Activated CD4-positive, alpha-beta T cell treated with anti-CD3 and anti-CD28 coated beads, Interleukin-2, amount 10 ng/mL, durations not matched to agents 24 days and 14 days (primary cell): ENCODE measurements at regions of chr1 and their contacts with region 1.

Region 1: DNA sequence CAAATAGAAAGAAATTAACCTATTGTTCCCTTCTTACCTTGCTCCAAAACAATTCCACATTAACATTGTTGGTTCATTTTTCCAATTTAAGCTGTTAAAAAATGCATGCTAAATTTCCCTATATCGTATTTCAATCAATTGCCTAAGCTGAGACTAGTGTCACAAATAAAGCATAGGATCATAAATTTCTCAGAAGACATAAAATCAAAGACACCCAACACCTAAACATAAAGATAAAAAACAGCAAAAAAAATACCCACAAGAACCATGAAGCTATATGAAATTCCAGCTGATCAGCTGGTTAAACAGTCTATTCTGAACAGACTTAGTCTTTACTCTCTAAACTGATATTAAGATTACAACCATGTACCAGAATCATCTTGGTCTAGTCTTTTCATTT is 32.3 kb downstream of the ACBD6 start:
- DNase-seq: no peak
- H3K4me3 Mint-ChIP-seq: no peak overlapping the region
- H3K27ac Mint-ChIP-seq: no peak overlapping the region
- H3K4me1 Mint-ChIP-seq: no peaks in the 10 kb centered on the region
- H3K27me3 Mint-ChIP-seq: no peaks in the 10 kb centered on the region

Region 2: DNA sequence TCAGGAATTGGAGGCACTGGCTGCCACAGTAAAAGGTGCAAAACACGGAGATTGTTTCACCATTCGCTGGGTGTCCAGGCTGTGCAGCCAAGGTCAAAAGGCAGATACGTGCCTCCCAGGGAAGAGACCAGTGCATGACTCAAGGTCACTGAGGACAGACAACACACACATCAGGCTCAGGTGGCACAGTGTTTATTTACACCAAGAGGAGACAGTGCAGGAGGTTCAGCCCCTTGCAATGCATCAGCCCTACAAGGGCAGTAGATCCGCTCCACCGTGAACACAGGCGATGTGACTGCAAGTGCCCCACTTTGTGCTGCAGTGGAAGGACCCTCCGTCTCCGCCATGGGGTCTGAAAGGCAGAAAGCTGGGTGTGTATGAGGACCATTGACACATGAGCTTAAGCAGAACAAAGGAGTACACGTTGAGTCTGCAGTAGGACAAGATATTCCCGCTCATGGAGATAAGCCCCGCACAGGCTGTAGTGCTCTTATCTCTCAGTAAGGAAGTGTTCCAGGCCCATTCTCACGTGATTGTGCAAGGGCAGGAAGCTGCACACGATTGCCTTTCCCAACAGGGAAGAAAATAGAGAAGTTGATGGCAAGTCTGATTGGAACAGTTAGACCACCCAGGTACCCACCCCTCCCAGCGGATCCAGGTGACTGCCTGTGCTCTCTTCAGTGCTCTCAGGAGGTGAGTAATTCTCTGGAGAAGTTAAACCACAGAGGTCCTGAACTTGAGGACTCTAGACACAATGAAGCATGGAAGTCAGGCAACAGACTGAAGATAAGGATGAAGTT is 352.9 kb before region 1 on chr1:
- intact Hi-C with region 1: no loop called
- DNase-seq: no peak
- H3K4me3 Mint-ChIP-seq: no peak overlapping the region
- H3K27ac Mint-ChIP-seq: no peak overlapping the region
- H3K4me1 Mint-ChIP-seq: no peaks in the 10 kb centered on the region
- H3K27me3 Mint-ChIP-seq: peaks cover 2% of the 10 kb centered on the region

Region 3: GRCh38 chr1:180262572-180263488 is 207.2 kb before region 1 on chr1:
- intact Hi-C with region 1: loop called (anchors 5 kb)
- DNase-seq: no peak
- H3K4me3 Mint-ChIP-seq: no peak overlapping the region
- H3K27ac Mint-ChIP-seq: no peak overlapping the region
- H3K4me1 Mint-ChIP-seq: no peaks in the 10 kb centered on the region
- H3K27me3 Mint-ChIP-seq: peaks cover 2% of the 10 kb centered on the region

Region 4: DNA sequence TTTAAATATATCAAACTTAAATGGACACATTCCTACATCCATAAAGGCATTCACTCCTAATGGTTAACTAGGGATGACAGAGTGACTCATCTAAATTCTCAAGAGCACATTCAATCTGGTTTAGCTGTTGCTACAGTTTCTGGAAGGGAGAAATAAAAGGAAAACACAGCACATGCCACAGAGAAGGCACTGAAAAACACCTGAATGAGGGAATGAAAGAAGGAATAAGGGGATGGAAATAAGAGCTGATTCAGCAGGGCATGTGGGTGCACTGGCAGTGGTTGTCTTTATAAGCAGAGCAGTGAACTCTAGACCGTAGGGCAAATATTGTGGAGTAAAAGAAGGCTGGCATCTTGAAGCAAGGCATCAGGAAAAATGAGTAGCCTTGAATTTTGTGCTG is 160.7 kb before region 1 on chr1:
- intact Hi-C with region 1: no loop called
- DNase-seq: no peak
- H3K4me3 Mint-ChIP-seq: no peak overlapping the region
- H3K27ac Mint-ChIP-seq: peak overlapping the region; percentile 45
- H3K4me1 Mint-ChIP-seq: no peaks in the 10 kb centered on the region
- H3K27me3 Mint-ChIP-seq: no peaks in the 10 kb centered on the region

Region 5: DNA sequence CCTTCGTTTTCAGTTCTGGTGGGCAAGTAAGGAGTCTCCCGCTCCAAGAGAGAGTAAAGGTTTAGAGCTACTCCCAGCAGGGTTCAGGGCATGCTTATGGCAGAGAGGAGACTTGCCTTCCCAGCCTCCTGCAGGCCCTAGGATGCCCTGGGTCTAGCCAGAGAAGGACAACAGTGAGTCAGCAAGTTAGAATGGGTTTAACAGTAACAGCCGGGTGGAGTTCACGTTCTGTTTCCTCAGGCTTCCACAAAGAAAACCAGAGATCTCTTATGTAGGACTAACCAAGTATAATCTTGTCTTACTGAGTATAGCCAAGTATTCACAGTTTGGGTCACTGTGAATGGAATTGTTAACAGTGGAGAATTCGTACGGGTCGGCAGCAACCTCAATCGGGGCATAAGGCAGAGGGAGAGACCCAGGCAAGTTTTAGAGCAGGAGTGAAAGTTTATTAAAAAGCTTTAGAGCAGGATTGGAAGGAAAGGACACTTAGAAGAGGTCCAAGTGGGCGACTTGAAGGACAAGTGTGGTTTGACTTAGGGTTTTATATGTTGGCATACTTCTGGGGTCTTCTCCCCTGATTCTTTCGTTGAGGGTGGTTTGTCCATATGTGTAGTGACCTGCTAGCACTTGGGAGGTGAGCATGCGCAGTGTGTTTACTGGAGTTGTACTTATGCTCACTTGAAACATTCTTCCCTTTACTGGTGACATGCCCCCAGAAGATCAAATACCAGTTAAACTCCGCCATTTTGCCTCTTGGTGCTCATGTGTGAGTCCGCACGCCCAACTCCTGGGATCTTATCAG is 93.2 kb after region 1 on chr1:
- intact Hi-C with region 1: no loop called
- DNase-seq: no peak
- H3K4me3 Mint-ChIP-seq: no peak overlapping the region
- H3K27ac Mint-ChIP-seq: no peak overlapping the region
- H3K4me1 Mint-ChIP-seq: no peaks in the 10 kb centered on the region
- H3K27me3 Mint-ChIP-seq: peaks cover 25% of the 10 kb centered on the region